ENCODE measurements at regions of chr9 and their contacts with region 1.

Region 1: GRCh38 chr9:100598641-100599145 is 20.8 kb downstream of the CAVIN4 start:
- DNase-seq: peak; percentile 91
- H3K4me3 ChIP-seq: peak overlapping the region; percentile 43
- H3K27ac ChIP-seq: no peak overlapping the region
- H3K4me1 ChIP-seq: no peaks in the 10 kb centered on the region
- H3K27me3 ChIP-seq: no peaks in the 10 kb centered on the region
- CTCF ChIP-seq: no peak

Region 2: GRCh38 chr9:99184475-99185347 is 1414.0 kb before region 1 on chr9:
- intact Hi-C with region 1: loop called (anchors 10 kb)
- DNase-seq: peak; percentile 86
- H3K4me3 ChIP-seq: peak overlapping the region; percentile 33
- H3K27ac ChIP-seq: no peak overlapping the region
- H3K4me1 ChIP-seq: peaks cover 4% of the 10 kb centered on the region
- H3K27me3 ChIP-seq: no peaks in the 10 kb centered on the region
- CTCF ChIP-seq: peak; percentile 95

Region 3: DNA sequence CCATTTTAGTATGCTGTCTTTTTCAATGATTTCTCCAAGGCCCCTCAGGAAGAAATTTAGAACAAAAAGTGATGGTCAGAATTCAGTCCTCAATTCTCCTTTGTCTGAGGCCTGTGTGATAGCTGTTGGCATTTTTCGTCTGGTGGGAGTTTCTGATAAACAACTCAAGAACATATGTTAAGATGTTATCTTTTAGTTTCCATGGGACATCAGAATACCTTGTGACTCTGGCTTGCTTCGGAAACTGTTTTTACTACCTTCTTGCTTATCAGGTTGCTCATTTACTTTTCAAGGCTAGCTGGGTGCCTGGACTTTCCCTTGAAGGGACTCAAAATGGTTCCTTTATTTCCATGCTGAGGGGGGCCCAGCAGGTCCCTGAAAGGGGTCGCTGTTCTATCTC is 402.5 kb before region 1 on chr9:
- intact Hi-C with region 1: no loop called
- DNase-seq: no peak
- H3K4me3 ChIP-seq: no peak overlapping the region
- H3K27ac ChIP-seq: no peak overlapping the region
- H3K4me1 ChIP-seq: no peaks in the 10 kb centered on the region
- H3K27me3 ChIP-seq: no peaks in the 10 kb centered on the region
- CTCF ChIP-seq: no peak

Region 4: GRCh38 chr9:100426530-100427428 is 171.9 kb before region 1 on chr9 and contains the start of gene MSANTD3:
- intact Hi-C with region 1: loop called (anchors 5 kb)
- DNase-seq: peak; percentile 49
- H3K4me3 ChIP-seq: peak within 1 kb of the TSS; percentile 74
- H3K27ac ChIP-seq: peak within 1 kb of the TSS; percentile 85
- H3K4me1 ChIP-seq: peaks cover 5% of the 10 kb centered on the region
- H3K27me3 ChIP-seq: no peaks in the 10 kb centered on the region
- CTCF ChIP-seq: no peak
- total RNA-seq, gene MSANTD3: 9.1 to 11.7 TPM

Measured in colonic mucosa (tissue), 4 donors.